ENCODE measurements at regions of chr17 and their contacts with region 1.

Region 1: DNA sequence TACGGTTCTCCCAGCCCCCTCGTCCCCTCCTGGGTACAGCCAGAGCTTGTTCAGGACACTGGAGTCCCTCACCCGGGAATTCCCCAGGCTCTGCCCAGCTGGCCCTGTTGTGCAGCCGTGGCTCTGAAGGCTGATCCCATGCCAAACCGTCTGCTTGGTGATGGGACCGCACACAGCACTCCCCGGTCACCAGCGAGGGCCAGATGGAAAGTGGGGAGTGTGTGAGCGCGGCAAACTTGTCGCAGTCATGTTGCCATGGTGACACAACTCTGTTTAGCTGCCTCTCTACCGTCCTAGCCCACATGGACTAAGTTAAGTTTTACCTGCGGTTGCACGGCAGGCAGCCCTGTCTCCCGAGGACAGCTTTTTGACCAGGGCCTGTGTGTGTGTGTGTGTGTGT is 107.9 kb downstream of the RAP1GAP2 start:
- DNase-seq: no peak
- ATAC-seq: no peak
- H3K4me3 ChIP-seq: no peak overlapping the region
- H3K27ac ChIP-seq: no peak overlapping the region
- H3K4me1 ChIP-seq: no peaks in the 10 kb centered on the region
- H3K27me3 ChIP-seq: no peaks in the 10 kb centered on the region

Region 2: GRCh38 chr17:3298260-3298659 is 394.1 kb after region 1 on chr17 and contains the start of gene OR3A1:
- intact Hi-C with region 1: loop called in 1 of 2 experiments (anchors 10 kb)
- DNase-seq: peak in 1 of 2 donors; percentile 41
- ATAC-seq: no peak
- H3K4me3 ChIP-seq: no peak within 1 kb of the TSS
- H3K27ac ChIP-seq: no peak within 1 kb of the TSS
- H3K4me1 ChIP-seq: no peaks in the 10 kb centered on the region
- H3K27me3 ChIP-seq: no peaks in the 10 kb centered on the region
- total RNA-seq, gene OR3A1: not detected